ENCODE measurements at regions of chr22 and their contacts with region 1.

Region 1: DNA sequence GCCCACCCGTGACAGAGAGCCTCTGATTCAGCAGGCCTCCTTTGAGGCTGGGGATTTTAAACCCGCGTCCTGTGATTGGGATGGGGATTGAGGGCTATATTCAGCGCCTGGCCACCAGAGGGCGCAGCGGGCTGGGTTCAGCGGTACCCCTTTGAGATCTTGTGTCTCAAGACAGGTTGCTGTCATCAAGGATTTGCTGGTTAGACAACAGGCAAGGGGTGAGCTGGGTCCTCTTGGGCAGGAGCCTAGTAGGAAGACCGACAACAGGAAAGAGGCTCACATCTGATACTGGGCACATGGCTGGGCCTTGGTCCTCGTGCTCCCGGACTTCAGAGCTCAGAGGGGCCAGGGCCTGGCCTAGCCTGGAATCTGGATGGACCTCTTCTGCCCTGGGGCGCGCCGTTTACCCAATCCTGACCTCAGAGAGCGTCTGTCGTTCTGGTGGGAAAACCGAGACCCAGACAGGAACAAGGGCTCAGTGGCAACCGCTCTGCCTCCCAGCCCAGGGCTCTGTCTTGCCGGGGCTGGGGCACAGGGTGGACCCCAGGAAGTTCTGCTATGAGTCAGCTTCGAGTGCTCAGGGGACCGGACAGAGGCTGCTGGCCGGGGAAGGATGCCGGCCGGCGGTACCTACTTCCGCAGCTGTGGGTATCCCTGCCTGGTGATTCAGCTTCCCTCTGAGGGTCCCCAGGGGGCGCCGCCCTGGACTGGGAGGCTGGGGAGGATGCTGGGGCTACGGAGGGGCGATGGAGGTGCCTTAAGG is 929 bp upstream of the SLC35E4 start:
- DNase-seq: peak; percentile 87 to 89
- H3K4me3 ChIP-seq: peak overlapping the region; percentile 74; the same call in 1 of the 2 replicates
- H3K27ac ChIP-seq: peak overlapping the region; percentile 50
- H3K4me1 ChIP-seq: peaks cover 25% of the 10 kb centered on the region
- H3K27me3 ChIP-seq: no peaks in the 10 kb centered on the region
- CTCF ChIP-seq: peak; percentile 99

Region 2: DNA sequence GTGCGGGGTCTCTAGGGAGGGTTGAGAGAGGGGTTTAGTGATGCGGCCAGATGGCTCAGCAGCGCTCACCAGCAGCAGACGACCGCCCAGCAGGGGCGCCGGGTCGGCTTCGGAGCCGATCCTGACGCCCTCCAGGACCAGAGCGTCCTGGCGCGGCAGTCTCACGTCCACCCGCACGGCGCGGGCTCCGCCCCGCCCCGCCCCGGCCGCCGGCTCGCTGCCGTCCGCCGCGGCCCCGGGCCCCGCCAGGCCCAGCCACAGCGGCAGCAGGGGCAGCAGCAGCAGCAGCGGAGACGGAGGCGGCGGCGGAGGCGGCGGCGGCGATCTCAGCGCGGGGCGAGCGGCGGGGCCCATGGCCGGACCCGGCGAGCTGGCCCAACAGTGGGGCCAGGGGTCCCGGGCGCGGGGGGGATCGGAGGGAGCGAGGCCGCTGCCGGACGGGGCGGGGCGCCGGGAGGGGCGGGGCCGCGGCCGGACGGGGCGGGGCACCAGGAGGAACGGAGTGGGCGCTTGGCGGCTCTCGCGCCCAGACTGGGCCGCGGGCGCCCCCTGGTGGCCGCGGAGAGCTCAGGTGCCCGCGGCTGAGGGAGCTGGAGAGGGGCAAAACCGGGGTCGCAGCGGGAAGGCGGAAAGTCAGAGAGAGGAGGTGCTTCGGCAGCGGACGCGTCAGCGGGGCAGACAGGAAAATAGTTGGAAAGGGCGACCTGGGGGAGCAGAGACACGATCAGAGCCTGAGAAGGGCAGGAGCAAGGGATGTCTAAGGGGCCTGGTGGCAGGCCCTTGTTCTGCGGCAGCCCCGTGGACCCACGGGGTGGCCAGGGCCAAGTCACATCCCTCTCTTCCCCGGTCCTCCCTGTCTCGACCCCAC is 247.5 kb before region 1 on chr22 and contains the start of gene RNF215:
- CTCF ChIA-PET with region 1: no interaction called
- POLR2A ChIA-PET with region 1: no interaction called
- intact Hi-C with region 1: loop called (anchors 1 kb)
- DNase-seq: peak; percentile 52 to 89
- H3K4me3 ChIP-seq: peak within 1 kb of the TSS; percentile 65
- H3K27ac ChIP-seq: no peak within 1 kb of the TSS
- H3K4me1 ChIP-seq: peaks cover 15% of the 10 kb centered on the region
- H3K27me3 ChIP-seq: no peaks in the 10 kb centered on the region
- CTCF ChIP-seq: peak; percentile 94
- total RNA-seq, gene RNF215: 24.0 and 33.8 TPM in 2 replicates

Region 3: DNA sequence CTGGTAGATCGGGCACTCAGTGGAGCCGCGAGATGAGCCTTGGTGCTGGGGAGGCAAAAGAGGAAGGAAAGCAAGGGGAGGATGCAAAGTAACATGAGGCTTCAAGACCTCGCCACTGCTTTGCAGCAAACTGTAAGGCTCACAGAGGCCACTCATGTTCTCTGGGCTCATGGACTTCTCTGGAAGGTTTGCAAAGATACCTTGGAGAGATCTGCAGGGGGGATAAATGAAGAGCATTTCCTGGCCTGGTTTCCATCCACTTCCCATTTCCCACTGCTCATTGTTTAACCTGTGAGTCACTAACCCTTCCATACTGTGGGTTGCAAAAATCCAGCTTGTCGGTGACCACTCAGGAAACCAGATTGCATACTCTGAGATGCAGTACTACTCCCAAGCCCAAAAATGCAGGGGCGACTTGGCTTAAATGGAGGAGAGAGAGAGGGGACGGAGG is 98.6 kb after region 1 on chr22:
- CTCF ChIA-PET with region 1: interaction called, 19 read pairs
- POLR2A ChIA-PET with region 1: interaction called, 3 read pairs
- intact Hi-C with region 1: no loop called
- DNase-seq: no peak
- H3K4me3 ChIP-seq: no peak overlapping the region
- H3K27ac ChIP-seq: no peak overlapping the region
- H3K4me1 ChIP-seq: no peaks in the 10 kb centered on the region
- H3K27me3 ChIP-seq: no peaks in the 10 kb centered on the region
- CTCF ChIP-seq: no peak

Region 4: GRCh38 chr22:30920407-30920806 is 285.8 kb after region 1 on chr22:
- CTCF ChIA-PET with region 1: no interaction called
- POLR2A ChIA-PET with region 1: no interaction called
- intact Hi-C with region 1: loop called (anchors 10 kb)
- DNase-seq: peak; percentile 46 to 74
- H3K4me3 ChIP-seq: no peak overlapping the region
- H3K27ac ChIP-seq: no peak overlapping the region
- H3K4me1 ChIP-seq: no peaks in the 10 kb centered on the region
- H3K27me3 ChIP-seq: no peaks in the 10 kb centered on the region
- CTCF ChIP-seq: peak; percentile 98

Region 5: DNA sequence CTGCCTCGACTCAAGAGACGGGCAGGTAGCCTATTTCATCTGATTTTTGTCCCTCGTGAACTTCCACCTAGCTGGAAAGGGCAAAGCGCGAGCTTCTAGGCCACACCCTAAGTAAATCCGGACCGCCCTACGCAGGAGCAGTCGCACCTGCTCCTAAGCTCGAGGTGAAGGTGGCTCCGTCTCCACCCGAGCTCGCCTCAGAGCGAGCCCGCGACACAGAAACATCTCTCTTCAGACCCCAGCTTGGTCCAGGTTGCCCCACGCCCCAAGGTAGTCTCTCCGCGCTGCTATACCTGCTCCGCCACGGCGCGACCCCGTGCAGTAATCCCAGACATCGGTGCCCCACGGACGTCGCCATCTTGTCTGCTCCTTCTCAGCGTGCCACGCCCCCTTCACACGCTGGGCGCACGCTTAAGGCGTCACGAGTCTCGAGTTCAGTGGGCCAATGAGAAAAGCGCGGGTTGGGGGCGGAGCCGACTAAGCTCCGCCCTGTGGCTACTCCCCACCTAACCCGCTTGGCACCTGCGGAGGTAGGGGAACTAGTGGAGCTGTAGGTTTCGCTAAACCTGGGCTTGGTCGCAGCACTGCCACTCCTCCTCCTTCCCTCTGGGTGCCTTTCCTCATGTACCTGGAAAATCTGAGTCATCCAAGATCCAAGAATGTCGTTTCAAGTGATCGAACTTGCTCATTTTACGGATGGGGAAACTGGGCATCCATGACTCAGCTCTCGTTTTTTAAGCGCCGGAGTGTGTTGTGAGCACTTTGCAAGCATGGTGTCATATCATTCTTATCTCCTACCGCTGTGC is 1027.4 kb after region 1 on chr22 and contains the start of gene PISD:
- CTCF ChIA-PET with region 1: no interaction called
- POLR2A ChIA-PET with region 1: no interaction called
- intact Hi-C with region 1: no loop called
- DNase-seq: peak; percentile 98 to 99
- H3K4me3 ChIP-seq: peak within 1 kb of the TSS; percentile 79
- H3K27ac ChIP-seq: peak within 1 kb of the TSS; percentile 98
- H3K4me1 ChIP-seq: peaks cover 28% of the 10 kb centered on the region
- H3K27me3 ChIP-seq: no peaks in the 10 kb centered on the region
- CTCF ChIP-seq: no peak
- total RNA-seq, gene PISD: 46.4 and 46.8 TPM in 2 replicates

Region 6: DNA sequence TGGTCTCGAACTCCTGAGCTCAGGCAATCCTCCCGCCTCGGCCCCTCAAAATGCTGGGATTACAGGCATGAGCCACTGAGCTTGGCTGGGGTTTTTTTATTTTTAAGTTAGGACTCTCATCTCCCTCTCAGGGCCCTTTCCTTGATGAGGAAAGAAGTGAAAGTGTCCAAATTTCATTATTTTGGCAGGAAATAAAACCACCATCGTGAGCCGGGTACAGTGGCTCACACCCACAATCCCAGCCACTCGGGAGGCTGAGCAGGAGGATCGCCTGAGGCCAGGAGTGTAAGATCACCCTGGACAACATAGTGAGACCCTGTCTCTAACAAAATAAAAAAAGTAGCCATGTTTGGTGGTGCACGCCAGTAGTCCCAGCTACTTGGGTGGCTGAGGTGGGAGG is 1939.3 kb after region 1 on chr22:
- CTCF ChIA-PET with region 1: no interaction called
- POLR2A ChIA-PET with region 1: interaction called, 12 read pairs
- intact Hi-C with region 1: no loop called
- DNase-seq: no peak
- H3K4me3 ChIP-seq: no peak overlapping the region
- H3K27ac ChIP-seq: no peak overlapping the region
- H3K4me1 ChIP-seq: peaks cover 3% of the 10 kb centered on the region
- H3K27me3 ChIP-seq: no peaks in the 10 kb centered on the region
- CTCF ChIP-seq: no peak